ENCODE measurements at regions of chr6 and their contacts with region 1.

Region 1: DNA sequence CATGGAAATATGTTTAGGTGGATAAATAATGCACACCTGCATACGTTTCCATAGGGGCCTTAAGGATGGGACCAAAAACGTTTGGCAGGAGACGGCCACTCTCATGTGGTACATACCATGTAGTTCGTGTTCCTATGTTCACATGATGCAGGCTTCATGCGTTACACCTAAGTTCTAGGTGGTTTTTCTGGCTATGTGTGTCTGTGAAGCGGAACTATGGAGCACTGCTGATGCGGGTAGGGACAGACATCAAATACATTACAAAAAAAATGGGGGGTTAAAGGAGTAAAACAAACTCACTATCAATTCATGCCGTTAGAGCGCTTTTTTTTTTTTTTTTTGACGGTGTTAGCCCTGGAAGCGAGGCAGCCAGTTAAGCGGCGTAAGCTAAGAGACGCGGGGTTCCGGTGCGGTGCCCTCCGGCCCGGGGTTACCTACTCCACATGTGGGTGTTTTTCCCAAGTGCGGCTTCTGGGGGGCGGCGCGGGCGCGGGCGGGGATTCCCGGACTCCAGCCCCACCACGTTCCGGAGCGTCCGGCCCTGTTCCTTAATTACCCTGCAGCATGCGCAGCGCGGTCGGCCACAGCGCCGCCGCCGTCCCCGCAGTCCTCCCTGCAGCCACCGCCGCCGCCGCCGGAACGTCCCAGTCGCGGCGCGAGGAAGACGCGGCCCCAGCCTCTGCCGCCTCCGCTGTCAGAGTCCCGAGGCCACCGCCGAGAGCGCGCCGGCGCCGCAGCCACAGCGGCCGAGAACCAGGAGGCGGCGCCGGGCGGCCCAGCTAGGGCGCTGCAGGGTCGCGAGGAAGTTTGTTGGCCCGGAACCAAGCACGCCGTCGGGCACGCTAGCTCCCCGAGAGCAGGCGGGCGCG is 648 bp downstream of the COL19A1 start:
- DNase-seq: peak; percentile 74
- ATAC-seq: peak; percentile 88 to 94

Region 2: GRCh38 chr6:69985180-69985579 is 118.2 kb after region 1 on chr6:
- intact Hi-C with region 1: loop called in 1 of 2 experiments (anchors 10 kb)
- DNase-seq: no peak
- ATAC-seq: no peak

Measured in left cardiac atrium (tissue), 4 donors.